HCT116 (cell line): ENCODE measurements at regions of chr16 and their contacts with region 1.

Region 1: GRCh38 chr16:20849587-20850390 is 43.5 kb downstream of the REXO5 start:
- DNase-seq: peak; percentile 40
- ATAC-seq: peak; percentile 68
- H3K4me3 ChIP-seq: no peak overlapping the region
- H3K27ac ChIP-seq: no peak overlapping the region
- H3K4me1 ChIP-seq: peaks cover 19 to 22% of the 10 kb centered on the region in 2 experiments
- H3K27me3 ChIP-seq: no peaks in the 10 kb centered on the region
- CTCF ChIP-seq: peak; percentile 89 to 99 (median 97); a peak in 5 of 6 replicates
- POLR2A ChIP-seq: no peak
- RAD21 ChIP-seq: peak; percentile 98

Region 2: GRCh38 chr16:20826039-20826566 is 23.7 kb before region 1 on chr16:
- CTCF ChIA-PET with region 1: no interaction called
- POLR2A ChIA-PET with region 1: no interaction called
- RAD21 ChIA-PET with region 1: no interaction called
- intact Hi-C with region 1: no loop called
- DNase-seq: no peak
- ATAC-seq: no peak
- H3K4me3 ChIP-seq: no peak overlapping the region
- H3K27ac ChIP-seq: no peak overlapping the region
- H3K4me1 ChIP-seq: no peaks in the 10 kb centered on the region
- H3K27me3 ChIP-seq: no peaks in the 10 kb centered on the region
- CTCF ChIP-seq: no peak
- POLR2A ChIP-seq: no peak
- RAD21 ChIP-seq: no peak

Region 3: DNA sequence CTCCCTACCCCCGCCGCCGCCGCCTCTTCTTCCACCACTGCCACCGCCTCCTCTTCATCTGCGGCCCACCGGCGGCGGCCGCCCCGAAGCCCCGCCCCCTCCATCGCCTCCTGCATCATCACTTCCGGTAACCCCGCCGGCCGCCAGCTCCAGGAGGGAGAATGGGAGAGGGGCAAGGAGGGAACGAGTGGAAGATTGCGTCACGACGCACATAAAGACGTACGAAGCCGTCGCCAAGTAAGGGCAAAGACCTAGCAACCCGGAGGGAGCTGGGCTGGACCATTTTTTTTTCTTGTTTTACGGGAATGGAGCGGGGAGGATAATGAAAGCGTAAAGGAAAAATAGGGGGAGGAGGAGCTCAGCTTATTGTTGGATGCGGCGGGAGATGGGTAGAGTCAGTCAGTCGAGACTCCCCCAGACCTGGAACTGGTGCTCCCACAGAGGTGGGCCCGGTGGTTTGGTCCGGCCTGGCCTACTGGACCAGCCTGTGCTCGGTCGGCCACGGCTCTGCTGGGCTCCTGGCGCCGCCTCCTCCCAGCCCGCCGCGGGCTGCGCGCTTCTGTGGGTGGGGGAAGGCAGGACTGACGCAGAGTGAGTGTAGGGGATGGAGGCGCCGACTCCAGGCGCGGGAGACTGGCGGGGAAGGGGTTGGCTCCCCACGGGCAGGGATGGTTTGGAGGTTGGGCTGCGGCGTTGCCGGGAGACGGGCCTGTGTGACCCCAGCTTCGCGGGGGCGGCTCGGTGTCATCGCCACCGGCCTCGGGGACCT is 50.7 kb after region 1 on chr16 and contains the starts of genes DCUN1D3 and LYRM1:
- CTCF ChIA-PET with region 1: no interaction called
- POLR2A ChIA-PET with region 1: no interaction called
- RAD21 ChIA-PET with region 1: interaction called in 1 of 2 experiments, 3 read pairs
- intact Hi-C with region 1: loop called (anchors 5 kb)
- DNase-seq: peak; percentile 98
- ATAC-seq: peak; percentile 81
- H3K4me3 ChIP-seq: peak within 1 kb of the TSS; percentile 86 to 88
- H3K27ac ChIP-seq: peak within 1 kb of the TSS; percentile 90
- H3K4me1 ChIP-seq: peaks cover 45 to 68% of the 10 kb centered on the region in 2 experiments
- H3K27me3 ChIP-seq: no peaks in the 10 kb centered on the region
- CTCF ChIP-seq: no peak
- POLR2A ChIP-seq: peak; percentile 79
- RAD21 ChIP-seq: no peak
- total RNA-seq, gene DCUN1D3: 16.4 TPM
- total RNA-seq, gene LYRM1: 26.7 TPM

Region 4: DNA sequence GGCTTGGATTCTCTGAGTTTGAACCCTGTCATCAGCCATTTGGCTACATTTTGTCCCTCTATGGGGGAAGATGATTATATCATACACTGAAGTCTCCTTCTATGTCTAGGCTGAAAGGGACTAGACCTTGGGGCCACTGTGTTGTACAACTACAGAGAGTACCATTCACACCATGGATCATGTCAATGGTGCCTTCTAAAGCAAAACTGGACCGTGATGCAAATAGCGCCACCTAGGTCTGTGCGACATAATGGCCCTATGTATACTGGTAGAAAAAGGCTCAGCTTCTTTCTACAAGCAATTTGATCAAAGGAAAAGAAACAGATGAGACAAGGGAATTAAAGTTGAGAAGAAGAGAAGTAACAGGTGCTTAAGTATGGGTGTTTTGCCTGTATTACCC is 151.5 kb after region 1 on chr16:
- CTCF ChIA-PET with region 1: interaction called, 9 read pairs
- POLR2A ChIA-PET with region 1: no interaction called
- RAD21 ChIA-PET with region 1: no interaction called
- intact Hi-C with region 1: loop called (anchors 2 kb)
- DNase-seq: peak; percentile 38
- ATAC-seq: peak; percentile 97
- H3K4me3 ChIP-seq: no peak overlapping the region
- H3K27ac ChIP-seq: no peak overlapping the region
- H3K4me1 ChIP-seq: no peaks in the 10 kb centered on the region
- H3K27me3 ChIP-seq: no peaks in the 10 kb centered on the region
- CTCF ChIP-seq: peak; percentile 48 to 86 (median 80); a peak in 5 of 6 replicates
- POLR2A ChIP-seq: no peak
- RAD21 ChIP-seq: peak; percentile 62

Region 5: DNA sequence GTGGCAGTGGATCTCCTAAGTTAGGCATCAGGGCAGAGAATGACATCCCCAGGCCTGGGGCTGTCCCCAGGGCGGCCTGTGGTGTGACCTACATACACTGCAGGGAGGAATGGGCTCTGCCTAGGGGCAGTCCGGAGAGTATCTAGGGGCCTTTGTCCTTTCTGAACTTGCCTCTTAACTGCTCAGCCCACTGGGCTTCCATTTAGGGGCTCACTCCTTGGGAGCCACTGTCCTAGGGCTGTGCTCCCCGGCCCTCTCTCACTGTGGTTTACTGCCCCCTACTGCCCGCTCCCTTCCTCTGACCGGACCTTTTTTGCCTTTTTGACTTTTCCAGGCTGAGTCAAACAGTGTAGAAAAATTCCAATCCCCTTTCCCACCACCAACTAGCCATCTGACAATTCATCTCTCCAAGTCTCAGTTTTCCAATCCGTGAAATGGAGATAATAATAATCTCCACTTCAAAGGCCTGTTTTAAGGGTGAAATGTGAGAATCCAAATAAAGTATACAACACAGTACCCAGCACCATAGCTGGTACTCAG is 234.0 kb after region 1 on chr16:
- CTCF ChIA-PET with region 1: interaction called, 41 read pairs
- POLR2A ChIA-PET with region 1: no interaction called
- RAD21 ChIA-PET with region 1: interaction called, 10 to 11 read pairs
- intact Hi-C with region 1: loop called (anchors 1 kb)
- DNase-seq: peak; percentile 44
- ATAC-seq: peak; percentile 97
- H3K4me3 ChIP-seq: no peak overlapping the region
- H3K27ac ChIP-seq: no peak overlapping the region
- H3K4me1 ChIP-seq: no peaks in the 10 kb centered on the region
- H3K27me3 ChIP-seq: no peaks in the 10 kb centered on the region
- CTCF ChIP-seq: peak; percentile 79 to 88 (median 81); a peak in 5 of 6 replicates
- POLR2A ChIP-seq: no peak
- RAD21 ChIP-seq: peak; percentile 92

Region 6: DNA sequence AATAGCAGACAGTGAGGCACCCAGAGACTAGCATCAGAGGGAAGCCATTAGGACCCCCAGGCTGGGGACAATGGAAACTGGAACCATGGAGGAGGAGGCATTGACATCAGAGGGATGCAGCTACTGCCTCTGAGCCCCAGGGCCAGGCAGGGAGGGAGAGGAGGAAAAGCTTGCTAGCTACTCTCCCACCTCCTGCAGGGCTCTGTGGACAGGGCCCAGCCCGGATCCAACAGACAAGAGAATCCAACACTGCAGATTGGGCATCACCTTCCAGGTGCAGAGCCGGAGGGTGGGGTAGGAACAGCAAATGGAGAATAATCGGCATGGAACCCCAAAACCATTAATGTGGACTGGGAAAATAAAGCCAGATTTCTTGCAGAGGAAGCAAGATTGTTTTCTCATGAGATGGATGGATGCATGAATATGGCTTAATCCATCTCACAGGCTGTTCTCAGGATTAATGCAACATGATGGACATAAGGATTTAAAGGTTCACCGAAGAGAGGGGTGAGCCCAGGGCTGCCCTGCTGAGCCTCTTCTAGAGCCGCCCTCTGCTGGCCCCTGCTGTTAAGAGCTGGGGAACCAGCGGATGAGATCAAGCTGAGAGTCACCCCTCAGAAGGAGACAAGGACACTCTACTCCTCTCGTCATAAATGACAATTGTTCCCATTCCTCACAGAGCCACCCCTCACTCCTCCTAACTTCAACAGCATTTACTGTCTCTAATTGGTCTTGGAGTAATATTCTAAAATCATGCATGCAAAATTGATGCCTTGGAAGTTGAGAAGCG is 252.0 kb after region 1 on chr16:
- CTCF ChIA-PET with region 1: interaction called, 34 read pairs
- POLR2A ChIA-PET with region 1: interaction called, 4 read pairs
- RAD21 ChIA-PET with region 1: no interaction called
- intact Hi-C with region 1: loop called (anchors 1 kb)
- DNase-seq: peak; percentile 19
- ATAC-seq: peak; percentile 96
- H3K4me3 ChIP-seq: no peak overlapping the region
- H3K27ac ChIP-seq: no peak overlapping the region
- H3K4me1 ChIP-seq: peaks cover 7 to 21% of the 10 kb centered on the region in 2 experiments; a peak in 3 of 4 replicates
- H3K27me3 ChIP-seq: no peaks in the 10 kb centered on the region
- CTCF ChIP-seq: peak; percentile 35 to 64 (median 56); a peak in 4 of 6 replicates
- POLR2A ChIP-seq: no peak
- RAD21 ChIP-seq: peak; percentile 66

Region 7: GRCh38 chr16:21158208-21159110 is 308.7 kb after region 1 on chr16 and contains the start of gene LDAF1:
- CTCF ChIA-PET with region 1: interaction called, 6 read pairs
- POLR2A ChIA-PET with region 1: no interaction called
- RAD21 ChIA-PET with region 1: no interaction called
- intact Hi-C with region 1: loop called (anchors 5 kb)
- DNase-seq: peak; percentile 41
- ATAC-seq: peak; percentile 93
- H3K4me3 ChIP-seq: peak within 1 kb of the TSS; percentile 62 to 74
- H3K27ac ChIP-seq: peak within 1 kb of the TSS; percentile 51
- H3K4me1 ChIP-seq: peaks cover 15 to 27% of the 10 kb centered on the region in 2 experiments
- H3K27me3 ChIP-seq: no peaks in the 10 kb centered on the region
- CTCF ChIP-seq: no peak
- POLR2A ChIP-seq: no peak
- RAD21 ChIP-seq: no peak; the same call in none of the 2 replicates
- total RNA-seq, gene LDAF1: 30.0 TPM

Region 8: DNA sequence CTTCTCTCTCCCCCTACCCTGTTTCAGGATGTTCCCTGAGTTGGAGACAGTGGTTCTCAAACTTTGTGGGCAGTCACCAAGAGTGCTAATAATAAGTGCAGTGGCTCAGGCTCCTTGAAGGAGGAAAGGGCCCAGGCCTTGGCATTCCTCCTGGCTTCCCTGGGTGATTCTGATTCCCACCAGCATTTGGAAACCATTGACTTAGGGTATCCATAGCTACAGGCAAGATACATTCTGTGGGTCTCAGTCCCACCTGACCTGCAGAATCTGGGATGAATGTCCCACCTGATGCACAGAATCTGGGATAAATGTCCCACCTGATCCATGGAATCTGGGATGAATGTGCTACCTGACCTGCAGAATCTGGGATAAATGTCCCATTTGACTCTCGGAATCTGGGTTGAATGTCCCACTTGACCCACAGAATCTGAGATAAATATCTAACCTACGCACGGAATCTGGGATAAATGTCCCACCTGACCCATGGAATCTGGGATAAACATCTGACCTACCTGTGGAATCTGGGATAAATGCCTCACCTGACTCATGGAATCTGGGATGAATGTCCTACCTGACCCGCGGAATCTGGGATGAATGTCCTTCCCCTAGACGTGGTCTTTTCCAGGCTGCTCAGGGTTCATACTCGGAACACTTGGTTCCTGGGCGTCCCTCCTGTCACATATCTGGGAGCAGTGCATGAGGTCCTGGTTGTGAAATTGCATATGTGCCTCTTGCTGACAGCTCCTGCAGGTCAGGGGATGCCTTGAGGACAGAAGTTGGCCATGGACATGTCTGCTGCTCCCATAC is 1827.4 kb after region 1 on chr16:
- CTCF ChIA-PET with region 1: no interaction called
- POLR2A ChIA-PET with region 1: no interaction called
- RAD21 ChIA-PET with region 1: no interaction called
- intact Hi-C with region 1: loop called (anchors 5 kb)
- DNase-seq: no peak
- ATAC-seq: no peak
- H3K4me3 ChIP-seq: no peak overlapping the region
- H3K27ac ChIP-seq: no peak overlapping the region
- H3K4me1 ChIP-seq: no peaks in the 10 kb centered on the region
- H3K27me3 ChIP-seq: peaks cover 54% of the 10 kb centered on the region
- CTCF ChIP-seq: no peak
- POLR2A ChIP-seq: no peak
- RAD21 ChIP-seq: no peak